GM10248 (cell line): ENCODE measurements at regions of chr2 and their contacts with region 1.

Region 1: DNA sequence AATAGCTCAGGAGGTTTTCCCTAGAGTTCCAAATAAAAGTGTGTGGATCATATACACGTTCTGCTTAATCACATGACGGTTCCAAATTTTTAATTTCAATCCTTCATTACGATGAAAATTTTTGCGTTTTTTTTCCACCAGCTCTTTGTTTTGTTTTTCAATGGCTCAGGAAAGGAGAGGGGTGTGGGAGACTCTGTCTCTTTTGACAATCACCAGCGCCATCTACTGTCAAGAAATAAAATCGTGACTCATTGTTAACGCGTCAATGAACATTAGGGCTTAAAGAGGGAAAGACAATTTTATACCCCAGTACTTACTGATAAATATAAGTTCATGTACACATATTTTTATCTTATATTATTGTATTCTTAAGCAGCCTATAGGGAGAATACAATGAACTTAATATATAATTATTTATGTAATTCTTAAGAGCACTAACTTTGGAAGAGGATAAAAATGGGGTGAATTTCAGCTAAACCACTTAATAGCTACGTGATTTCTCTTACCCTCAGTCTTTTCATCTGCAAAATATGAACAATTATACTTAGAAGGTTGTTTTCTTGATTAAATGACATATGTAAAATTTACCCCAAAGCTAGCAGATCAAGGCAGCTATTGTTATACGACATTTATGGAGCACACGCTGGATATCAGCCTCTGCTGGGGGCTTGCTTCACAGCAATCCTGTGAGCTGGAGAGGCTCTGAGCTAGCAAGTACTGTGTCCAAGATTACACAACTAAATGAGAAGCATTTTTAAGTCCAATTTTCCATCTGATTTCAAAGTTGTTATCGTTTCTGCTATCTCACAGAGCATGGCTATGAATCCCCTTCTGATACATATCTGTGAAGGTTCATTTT is 47.4 kb upstream of the RMDN2 start:
- DNase-seq: peak; percentile 50
- CTCF ChIP-seq: peak; percentile 60

Region 2: GRCh38 chr2:37376421-37377186 is 501.1 kb before region 1 on chr2:
- CTCF ChIA-PET with region 1: interaction called, 27 read pairs
- POLR2A ChIA-PET with region 1: no interaction called
- DNase-seq: peak; percentile 59
- CTCF ChIP-seq: no peak

Region 3: GRCh38 chr2:37653805-37654378 is 223.8 kb before region 1 on chr2:
- CTCF ChIA-PET with region 1: interaction called, 20 read pairs
- POLR2A ChIA-PET with region 1: no interaction called
- DNase-seq: peak; percentile 45
- CTCF ChIP-seq: no peak

Region 4: DNA sequence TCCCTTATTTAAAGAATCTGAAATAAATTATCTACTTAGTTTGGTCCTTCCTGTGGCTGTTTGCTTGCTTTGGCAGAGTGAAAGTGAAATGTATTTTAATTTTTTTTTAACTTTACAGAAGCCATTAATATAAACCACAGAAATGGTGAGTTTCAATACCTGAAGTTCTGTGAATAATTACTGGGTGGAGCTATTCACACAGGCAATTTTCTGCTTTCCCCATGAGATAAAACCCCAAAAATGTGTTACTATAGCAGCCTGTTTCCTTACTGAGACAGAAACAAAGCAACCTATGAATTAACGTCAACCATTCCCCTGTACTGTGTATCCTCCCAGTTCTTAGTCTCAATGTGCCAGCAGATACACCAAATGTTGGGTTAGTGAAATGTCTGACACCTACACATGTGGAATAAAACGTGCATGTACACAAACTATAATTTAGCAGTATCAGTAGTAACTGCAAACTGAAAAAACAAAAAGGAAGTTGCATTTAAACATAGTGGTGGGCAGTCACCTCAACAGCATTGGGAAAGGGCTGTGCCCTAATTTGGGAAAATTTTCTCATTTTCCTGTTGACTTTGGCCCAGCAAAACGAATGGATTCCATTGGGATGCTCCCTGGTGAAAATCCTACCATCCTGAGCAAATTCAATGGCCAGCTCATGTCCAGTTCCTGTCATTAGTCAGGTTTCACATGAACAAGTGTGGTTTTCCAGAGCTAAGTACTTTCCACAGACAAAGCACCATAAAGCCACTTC is 25.7 kb before region 1 on chr2:
- CTCF ChIA-PET with region 1: interaction called, 59 read pairs
- POLR2A ChIA-PET with region 1: no interaction called
- DNase-seq: peak; percentile 66
- CTCF ChIP-seq: no peak

Region 5: GRCh38 chr2:37896314-37896713 is 18.6 kb after region 1 on chr2:
- CTCF ChIA-PET with region 1: interaction called, 91 read pairs
- POLR2A ChIA-PET with region 1: no interaction called
- DNase-seq: no peak
- CTCF ChIP-seq: peak; percentile 22

Region 6: DNA sequence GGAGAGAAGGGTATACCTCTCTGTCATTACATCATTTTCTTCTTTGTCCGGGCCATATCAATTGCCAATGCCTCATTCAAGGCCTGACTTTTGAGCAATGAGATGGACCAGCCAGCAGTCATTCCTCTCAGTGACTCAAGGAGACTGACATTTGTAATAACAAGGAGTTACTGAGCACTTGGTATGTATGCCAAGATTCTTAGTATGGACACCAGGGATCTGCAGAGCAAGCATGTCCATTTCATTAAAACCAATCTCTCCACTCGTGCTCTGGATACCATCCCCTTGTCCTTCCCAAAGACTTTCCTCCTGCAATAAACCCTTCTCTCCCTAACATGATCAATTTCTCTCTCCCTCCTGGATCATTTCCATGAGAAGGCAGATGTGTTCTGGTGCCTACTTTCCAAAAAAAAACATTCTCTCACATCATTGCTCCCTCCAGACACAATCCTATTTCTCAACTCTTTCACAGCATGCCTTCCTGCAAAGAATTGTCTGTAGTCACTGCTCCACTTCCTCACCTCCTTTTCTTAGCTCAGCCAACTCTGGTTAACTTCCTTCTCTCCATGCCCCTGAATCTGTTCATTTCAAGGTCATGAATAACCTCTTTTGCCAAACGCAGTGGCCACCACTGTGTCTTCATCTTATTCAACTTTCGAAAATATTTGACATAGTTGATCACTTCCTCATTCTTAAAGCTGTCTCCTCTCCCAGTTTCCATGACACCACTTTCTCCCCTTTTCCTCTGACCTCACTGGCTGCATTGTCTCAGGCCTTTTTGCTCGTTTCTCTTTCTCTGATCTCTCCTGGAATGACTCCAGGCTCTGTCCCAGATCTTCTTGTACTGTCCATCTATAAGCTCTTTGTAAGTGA is 301.1 kb after region 1 on chr2:
- CTCF ChIA-PET with region 1: no interaction called
- POLR2A ChIA-PET with region 1: no interaction called
- DNase-seq: peak; percentile 27
- CTCF ChIP-seq: no peak